ENCODE measurements at regions of chr11 and their contacts with region 1.

Region 1: DNA sequence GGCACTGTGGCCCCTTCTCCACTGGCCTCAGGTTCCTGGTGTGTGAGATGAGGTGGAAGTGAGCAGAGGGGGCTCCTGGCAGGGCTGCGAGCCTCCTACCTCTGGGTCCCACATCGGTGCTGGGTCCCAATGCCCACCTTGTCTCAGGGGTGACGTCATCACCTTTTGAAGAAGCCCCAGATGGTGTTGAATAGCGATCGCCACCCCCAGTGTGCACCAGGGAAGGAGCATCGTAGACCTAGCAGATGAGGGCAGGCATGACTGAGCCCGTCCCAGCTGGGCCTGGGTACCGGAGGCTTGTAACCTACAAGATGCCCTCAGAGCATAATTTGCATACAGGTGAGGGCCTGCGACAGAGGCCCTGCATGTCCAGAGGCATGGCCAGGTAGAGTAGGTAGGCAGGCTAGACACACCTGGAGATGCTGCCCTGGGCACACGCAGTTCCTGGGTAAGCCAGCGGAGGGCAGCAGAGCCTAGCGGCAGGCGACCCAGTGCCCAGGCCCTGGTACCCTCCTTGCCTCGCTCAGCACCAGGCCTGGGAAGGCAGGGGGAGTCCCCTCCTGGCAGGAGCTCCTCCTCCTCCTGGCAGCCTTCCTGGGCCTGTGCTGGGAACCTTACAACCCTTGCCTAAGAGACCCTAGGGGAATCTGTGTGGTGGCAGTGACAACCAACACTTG is 52.5 kb downstream of the TPCN2 start:
- DNase-seq: peak; percentile 63 to 93 (median 82)
- ATAC-seq: peak; percentile 96
- H3K4me3 ChIP-seq: no peak overlapping the region
- H3K27ac ChIP-seq: no peak overlapping the region
- H3K4me1 ChIP-seq: peaks cover 3 to 14% of the 10 kb centered on the region in 2 donors
- H3K27me3 ChIP-seq: peaks cover 0 to 11% of the 10 kb centered on the region in 2 donors
- CTCF ChIP-seq: peak; percentile 97 to 100

Region 2: DNA sequence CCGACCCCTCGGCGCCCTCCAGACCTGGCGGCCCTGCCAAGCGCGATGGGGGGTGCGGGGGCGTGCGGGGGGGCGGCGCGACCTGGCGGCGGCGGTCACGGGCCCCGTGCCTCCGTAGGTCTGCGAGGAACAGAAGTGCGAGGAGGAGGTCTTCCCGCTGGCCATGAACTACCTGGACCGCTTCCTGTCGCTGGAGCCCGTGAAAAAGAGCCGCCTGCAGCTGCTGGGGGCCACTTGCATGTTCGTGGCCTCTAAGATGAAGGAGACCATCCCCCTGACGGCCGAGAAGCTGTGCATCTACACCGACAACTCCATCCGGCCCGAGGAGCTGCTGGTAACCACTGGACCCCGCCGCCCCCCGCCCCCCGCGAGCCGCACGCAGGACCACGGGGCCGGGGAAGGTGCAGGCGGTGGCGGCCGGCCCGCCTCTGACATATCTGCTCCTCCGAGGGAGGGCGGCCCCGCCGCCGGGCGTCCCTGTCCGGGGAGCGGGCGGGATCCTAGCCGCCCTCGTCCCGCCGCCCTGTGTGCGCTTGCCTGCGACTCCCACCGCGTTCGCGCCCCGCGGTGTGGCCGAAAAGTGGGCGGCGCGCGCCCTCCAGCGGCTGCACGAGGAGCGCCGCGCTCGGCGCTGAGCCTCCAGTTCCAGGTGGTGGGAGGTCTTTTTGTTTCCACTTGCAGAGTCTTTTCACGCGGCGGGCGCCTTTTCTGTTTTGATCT is 541.8 kb after region 1 on chr11:
- intact Hi-C with region 1: loop called (anchors 5 to 10 kb)
- DNase-seq: peak; percentile 72 to 95 (median 86)
- ATAC-seq: peak; percentile 66
- H3K4me3 ChIP-seq: peak overlapping the region; percentile 51 to 78
- H3K27ac ChIP-seq: peak overlapping the region; percentile 66 to 82
- H3K4me1 ChIP-seq: peaks cover 25 to 68% of the 10 kb centered on the region in 2 donors
- H3K27me3 ChIP-seq: peaks cover 8 to 66% of the 10 kb centered on the region in 2 donors
- CTCF ChIP-seq: peak; percentile 81 to 94